Heart right ventricle (tissue), 16 donors: ENCODE measurements at regions of chr15 and their contacts with region 1.

Region 1: DNA sequence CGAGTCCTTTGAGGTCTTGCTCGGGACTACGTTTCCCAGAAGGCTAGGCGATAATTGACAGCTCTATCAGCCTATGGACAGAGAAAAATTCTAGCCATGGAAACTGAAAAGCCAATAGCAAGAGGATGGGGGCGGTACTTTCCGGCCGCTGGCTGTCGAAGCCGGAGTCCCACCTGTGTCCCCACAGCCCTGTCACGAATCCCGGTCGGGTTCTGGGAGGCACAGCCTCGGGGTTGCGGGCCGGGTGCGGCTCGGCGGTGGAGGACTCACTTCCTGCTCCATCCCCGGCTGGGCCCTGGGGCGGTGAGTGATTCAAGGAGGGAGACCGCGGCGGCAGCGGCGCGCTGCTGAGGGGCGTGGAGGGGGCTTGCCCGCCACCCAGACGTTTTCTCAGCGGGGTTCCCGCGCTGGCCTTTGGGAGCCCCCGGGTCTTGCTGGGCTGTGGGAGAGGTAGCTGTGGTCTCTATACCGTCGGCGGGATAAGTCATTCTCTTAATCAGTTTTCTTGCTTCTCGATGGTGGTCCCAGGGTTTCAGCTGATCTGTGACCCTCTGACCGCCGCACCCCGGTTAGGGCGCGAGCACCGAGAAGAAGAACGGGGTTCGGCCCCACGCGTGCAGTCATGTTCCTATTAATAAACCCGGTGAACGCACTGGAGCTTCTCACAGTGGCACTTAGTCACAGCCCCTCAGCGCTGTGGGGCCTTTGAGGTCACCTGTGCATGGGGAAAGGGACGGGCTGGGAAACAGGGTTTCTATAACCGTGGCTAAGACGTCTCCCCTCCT is at the start of gene ZNF774:
- DNase-seq: peak; percentile 87 to 96
- ATAC-seq: peak; percentile 98 to 100 (median 99)
- H3K4me3 ChIP-seq: peak within 1 kb of the TSS; percentile 72 to 97 (median 85)
- H3K27ac ChIP-seq: peak within 1 kb of the TSS in 9 of 10 donors; percentile 67 to 91 (median 80)
- H3K4me1 ChIP-seq: peaks cover 0 to 13% (median 9%) of the 10 kb centered on the region in 9 donors
- H3K27me3 ChIP-seq: no peaks in the 10 kb centered on the region
- CTCF ChIP-seq: no peak
- total RNA-seq, gene ZNF774: 2.2 to 19.6 (median 7.0) TPM

Region 2: DNA sequence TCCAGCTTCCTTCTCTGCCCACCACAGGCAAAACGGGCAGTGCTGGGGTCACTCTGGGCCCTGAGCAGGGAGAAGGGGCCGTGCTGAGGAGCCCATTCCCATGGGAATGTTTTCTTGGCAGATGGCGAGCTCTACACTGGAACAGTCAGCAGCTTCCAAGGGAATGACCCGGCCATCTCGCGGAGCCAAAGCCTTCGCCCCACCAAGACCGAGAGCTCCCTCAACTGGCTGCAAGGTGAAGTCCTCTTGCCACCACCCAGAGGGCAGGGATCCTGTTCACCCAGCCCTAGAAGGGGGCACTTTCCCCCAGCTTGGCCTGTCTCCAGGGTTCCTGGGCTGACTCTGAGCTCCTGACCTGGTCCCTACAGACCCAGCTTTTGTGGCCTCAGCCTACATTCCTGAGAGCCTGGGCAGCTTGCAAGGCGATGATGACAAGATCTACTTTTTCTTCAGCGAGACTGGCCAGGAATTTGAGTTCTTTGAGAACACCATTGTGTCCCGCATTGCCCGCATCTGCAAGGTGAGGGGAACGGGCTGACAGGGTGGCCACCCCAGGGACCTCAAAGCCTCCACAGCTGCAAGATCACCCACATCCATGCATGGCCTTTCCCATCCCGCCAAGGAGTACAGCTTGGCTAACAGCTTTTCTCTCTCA is 130.9 kb before region 1 on chr15:
- intact Hi-C with region 1: no loop called
- DNase-seq: peak; percentile 76 to 77
- ATAC-seq: peak; percentile 73 to 87 (median 85)
- H3K4me3 ChIP-seq: no peak overlapping the region
- H3K27ac ChIP-seq: peak overlapping the region in 8 of 10 donors; percentile 20 to 66 (median 51)
- H3K4me1 ChIP-seq: peaks cover 2 to 14% (median 9%) of the 10 kb centered on the region in 9 donors
- H3K27me3 ChIP-seq: no peaks in the 10 kb centered on the region
- CTCF ChIP-seq: peak; percentile 52 to 82 (median 75)

Region 3: DNA sequence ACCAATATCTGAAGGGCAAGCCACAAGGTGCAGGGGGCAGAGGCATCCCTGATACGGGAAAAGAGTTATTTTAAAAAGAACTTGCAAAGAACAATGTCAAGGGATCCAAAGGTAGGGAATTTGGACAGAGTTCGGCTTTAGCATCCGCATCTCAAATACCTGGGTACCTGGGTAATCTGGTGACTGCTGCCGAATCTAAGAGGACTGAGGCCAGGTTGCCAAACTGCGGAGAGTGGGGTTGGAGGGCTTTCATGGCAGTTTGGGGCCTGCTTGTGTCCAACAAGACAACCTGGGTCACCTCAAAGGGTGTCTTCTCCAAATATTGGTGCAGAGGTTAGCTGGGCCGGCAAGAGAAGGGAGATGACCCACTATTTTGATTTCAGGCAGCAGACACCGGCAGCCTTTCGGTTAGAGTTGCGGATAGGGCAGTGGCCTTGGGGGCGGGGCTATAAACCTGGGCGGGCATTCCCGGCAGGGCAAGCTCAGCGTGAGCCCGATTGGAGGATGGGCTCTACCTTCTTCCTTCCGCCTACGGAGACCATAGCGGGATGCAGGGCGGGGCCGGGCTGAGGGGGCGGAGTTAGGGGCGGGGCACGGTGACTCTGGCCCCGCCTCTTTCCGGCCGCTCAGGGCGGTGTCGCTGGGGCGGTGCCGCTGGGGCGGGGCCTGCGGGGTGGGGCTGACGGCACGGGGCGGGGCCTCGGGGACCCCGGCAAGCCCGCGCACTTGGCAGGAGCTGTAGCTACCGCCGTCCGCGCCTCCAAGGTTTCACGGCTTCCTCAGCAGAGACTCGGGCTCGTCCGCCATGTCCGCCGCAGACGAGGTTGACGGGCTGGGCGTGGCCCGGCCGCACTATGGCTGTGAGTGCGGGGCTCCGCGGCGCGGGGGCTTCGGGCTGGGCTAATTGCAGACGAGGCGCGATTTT is 35.5 kb after region 1 on chr15 and contains the start of gene IQGAP1:
- intact Hi-C with region 1: loop called in 1 of 10 experiments (anchors 1 kb)
- DNase-seq: peak; percentile 98
- ATAC-seq: peak; percentile 96 to 99 (median 97)
- H3K4me3 ChIP-seq: peak within 1 kb of the TSS; percentile 57 to 97 (median 84)
- H3K27ac ChIP-seq: peak within 1 kb of the TSS; percentile 81 to 99 (median 97)
- H3K4me1 ChIP-seq: peaks cover 15 to 46% (median 43%) of the 10 kb centered on the region in 9 donors
- H3K27me3 ChIP-seq: no peaks in the 10 kb centered on the region
- CTCF ChIP-seq: no peak
- total RNA-seq, gene IQGAP1: 28.6 to 81.7 (median 35.0) TPM